OCI-LY7 (cell line): ENCODE measurements at regions of chr1 and their contacts with region 1.

Region 1: GRCh38 chr1:198620951-198621824 is 17.7 kb upstream of the PTPRC start:
- DNase-seq: peak; percentile 97
- H3K4me3 ChIP-seq: peak overlapping the region; percentile 65
- H3K27ac ChIP-seq: peak overlapping the region; percentile 98
- H3K4me1 ChIP-seq: peaks cover 81% of the 10 kb centered on the region
- CTCF ChIP-seq: no peak; the same call in 1 of the 2 replicates

Region 2: GRCh38 chr1:198534548-198535418 is 86.4 kb before region 1 on chr1:
- CTCF ChIA-PET with region 1: no interaction called
- POLR2A ChIA-PET with region 1: interaction called, 24 read pairs
- intact Hi-C with region 1: no loop called
- DNase-seq: peak; percentile 29
- H3K4me3 ChIP-seq: peak overlapping the region; percentile 14
- H3K27ac ChIP-seq: peak overlapping the region; percentile 41
- H3K4me1 ChIP-seq: peaks cover 62% of the 10 kb centered on the region
- CTCF ChIP-seq: no peak

Region 3: GRCh38 chr1:198606020-198606438 is 15.2 kb before region 1 on chr1:
- CTCF ChIA-PET with region 1: interaction called, 10 read pairs
- POLR2A ChIA-PET with region 1: interaction called, 206 read pairs
- intact Hi-C with region 1: no loop called
- DNase-seq: no peak
- H3K4me3 ChIP-seq: no peak overlapping the region
- H3K27ac ChIP-seq: no peak overlapping the region
- H3K4me1 ChIP-seq: peaks cover 48% of the 10 kb centered on the region
- CTCF ChIP-seq: no peak

Region 4: DNA sequence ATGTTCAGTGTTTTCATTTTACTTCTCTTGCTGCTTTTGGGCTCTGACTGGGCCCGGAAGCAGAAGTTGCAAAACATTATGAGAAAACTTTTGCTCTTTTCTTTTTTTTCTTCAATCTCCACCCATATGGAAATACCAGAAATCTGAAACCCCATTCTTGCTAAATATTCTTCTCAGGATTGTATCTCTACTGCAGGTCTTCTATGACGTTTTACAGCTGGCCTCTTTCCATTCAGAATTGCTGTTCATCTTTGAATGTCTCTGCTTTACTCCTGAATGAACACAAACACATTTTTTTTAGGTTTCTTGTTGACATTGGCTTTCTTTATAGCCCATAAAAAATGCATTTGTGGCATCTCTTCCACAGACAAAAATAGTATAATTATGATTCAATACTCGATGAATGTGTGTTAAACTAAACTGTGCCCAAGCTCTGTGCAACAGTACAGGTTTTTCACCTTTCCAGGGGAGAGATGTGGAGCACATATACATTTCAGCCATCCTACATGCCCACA is 36.4 kb after region 1 on chr1:
- CTCF ChIA-PET with region 1: no interaction called
- POLR2A ChIA-PET with region 1: interaction called, 87 read pairs
- intact Hi-C with region 1: loop called (anchors 1 kb)
- DNase-seq: peak; percentile 73
- H3K4me3 ChIP-seq: peak overlapping the region; percentile 58
- H3K27ac ChIP-seq: peak overlapping the region; percentile 86
- H3K4me1 ChIP-seq: peaks cover 84% of the 10 kb centered on the region
- CTCF ChIP-seq: no peak

Region 5: DNA sequence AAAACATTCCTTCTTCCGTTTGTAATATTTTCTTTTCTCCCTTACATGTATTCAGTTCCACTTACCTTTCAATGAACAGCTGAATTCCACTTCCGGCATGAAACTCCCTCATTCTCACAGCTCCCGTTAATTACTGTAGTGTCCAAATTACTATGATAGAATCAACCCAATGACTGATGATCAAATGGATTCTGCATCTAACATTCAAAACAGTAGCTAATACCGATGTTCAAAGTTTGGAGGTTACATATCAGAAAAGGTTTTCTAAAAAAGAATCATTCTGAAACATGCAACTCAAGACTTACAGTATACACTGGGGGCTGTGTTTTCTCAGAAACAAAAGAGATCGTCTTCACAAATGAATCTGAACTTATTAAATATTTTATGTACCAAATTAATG is 94.9 kb after region 1 on chr1:
- CTCF ChIA-PET with region 1: no interaction called
- POLR2A ChIA-PET with region 1: no interaction called
- intact Hi-C with region 1: no loop called
- DNase-seq: no peak
- H3K4me3 ChIP-seq: no peak overlapping the region
- H3K27ac ChIP-seq: no peak overlapping the region
- H3K4me1 ChIP-seq: no peaks in the 10 kb centered on the region
- CTCF ChIP-seq: no peak

Region 6: GRCh38 chr1:198937231-198938031 is 316.2 kb after region 1 on chr1:
- CTCF ChIA-PET with region 1: no interaction called
- POLR2A ChIA-PET with region 1: interaction called, 40 read pairs
- intact Hi-C with region 1: no loop called
- DNase-seq: peak; percentile 94
- H3K4me3 ChIP-seq: peak overlapping the region; percentile 78
- H3K27ac ChIP-seq: peak overlapping the region; percentile 88
- H3K4me1 ChIP-seq: peaks cover 29% of the 10 kb centered on the region
- CTCF ChIP-seq: no peak